ENCODE measurements at regions of chr20 and their contacts with region 1.

Region 1: DNA sequence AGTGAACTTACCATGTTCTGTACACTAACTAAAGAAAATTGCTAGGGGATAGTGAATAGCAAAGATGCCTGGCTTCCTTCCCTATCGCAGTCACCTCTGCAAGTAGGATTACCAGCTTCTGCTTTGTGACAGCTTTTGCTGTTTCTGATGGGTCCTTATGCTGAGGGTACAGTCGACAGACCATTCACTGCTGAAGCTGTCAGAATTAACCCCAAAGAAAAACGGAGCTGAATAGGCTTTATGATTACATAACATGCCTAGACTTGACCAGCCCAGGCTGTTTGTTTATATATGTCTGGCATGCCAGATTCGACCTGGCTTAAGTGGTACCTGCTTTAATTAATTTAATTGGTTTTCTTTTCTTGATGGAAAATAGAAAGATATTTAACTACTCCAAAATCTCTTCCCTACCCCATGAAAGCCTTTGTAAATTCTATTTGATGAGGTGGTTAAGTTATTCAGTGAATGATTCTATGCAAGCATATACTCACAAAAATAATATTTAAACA is 21.7 kb upstream of the PRELID3B start:
- DNase-seq: no peak
- H3K4me3 ChIP-seq: no peak overlapping the region
- H3K27me3 ChIP-seq: peaks cover 4% of the 10 kb centered on the region; the same call in 1 of the 2 replicates
- CTCF ChIP-seq: no peak

Region 2: DNA sequence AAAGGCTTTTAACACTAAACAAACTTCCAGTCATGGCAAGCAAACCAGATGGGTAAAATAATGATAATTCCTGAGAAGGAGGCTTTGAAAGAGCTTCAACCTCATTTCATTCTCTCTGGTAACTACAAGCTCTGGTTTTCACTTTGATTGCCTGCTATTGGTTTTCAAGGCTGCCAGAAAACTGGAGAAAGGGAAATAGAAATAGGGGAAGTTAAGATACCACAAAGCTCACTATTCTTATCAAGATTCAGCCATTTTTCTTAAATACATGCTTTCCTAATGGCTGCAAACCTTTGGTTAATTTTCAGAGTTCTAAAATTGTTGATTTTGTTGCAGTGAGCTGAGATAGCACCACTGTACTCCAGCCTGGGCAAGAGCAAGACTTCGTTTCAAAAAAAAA is 125.7 kb before region 1 on chr20:
- CTCF ChIA-PET with region 1: no interaction called
- POLR2A ChIA-PET with region 1: no interaction called
- DNase-seq: no peak
- H3K4me3 ChIP-seq: no peak overlapping the region
- H3K27me3 ChIP-seq: peaks cover 4% of the 10 kb centered on the region; the same call in 1 of the 2 replicates
- CTCF ChIP-seq: no peak

Region 3: DNA sequence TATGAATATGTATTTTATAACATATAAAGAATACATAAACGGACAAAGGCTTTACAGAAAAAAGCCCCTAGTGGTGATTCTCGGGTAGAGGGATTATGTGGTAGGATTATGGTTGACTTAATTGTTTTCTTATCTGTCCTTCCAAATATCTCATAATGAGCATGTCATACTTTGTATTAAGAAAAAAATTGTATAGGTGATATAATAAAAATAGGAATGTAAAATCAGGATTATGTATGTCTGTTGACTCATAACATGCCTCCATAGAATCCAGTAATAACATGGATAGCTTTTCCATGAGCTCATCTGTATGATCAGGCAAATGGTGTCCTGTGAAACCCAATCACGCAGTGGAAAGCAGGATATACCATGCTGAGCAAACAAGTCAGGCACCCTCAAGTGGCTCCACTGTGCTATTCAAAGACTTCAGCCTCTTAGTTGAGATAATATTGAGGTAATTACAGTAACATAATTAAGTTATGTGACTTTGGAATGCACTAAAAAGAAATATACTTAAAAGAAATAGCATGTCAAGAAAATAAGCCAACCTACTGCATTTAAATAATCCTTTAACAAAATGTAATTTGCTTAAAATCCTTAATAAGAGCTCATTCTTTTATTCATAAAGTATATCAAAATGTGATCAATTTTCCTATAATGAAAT is 17.9 kb after region 1 on chr20:
- CTCF ChIA-PET with region 1: interaction called, 11 read pairs
- POLR2A ChIA-PET with region 1: no interaction called
- DNase-seq: no peak
- H3K4me3 ChIP-seq: no peak overlapping the region
- H3K27me3 ChIP-seq: no peaks in the 10 kb centered on the region
- CTCF ChIP-seq: peak; percentile 23; the same call in 1 of the 2 replicates

Region 4: GRCh38 chr20:59253779-59254319 is 189.6 kb after region 1 on chr20:
- CTCF ChIA-PET with region 1: no interaction called
- POLR2A ChIA-PET with region 1: no interaction called
- DNase-seq: no peak
- H3K4me3 ChIP-seq: no peak overlapping the region
- H3K27me3 ChIP-seq: no peaks in the 10 kb centered on the region
- CTCF ChIP-seq: no peak